ENCODE measurements at regions of chr5 and their contacts with region 1.

Region 1: DNA sequence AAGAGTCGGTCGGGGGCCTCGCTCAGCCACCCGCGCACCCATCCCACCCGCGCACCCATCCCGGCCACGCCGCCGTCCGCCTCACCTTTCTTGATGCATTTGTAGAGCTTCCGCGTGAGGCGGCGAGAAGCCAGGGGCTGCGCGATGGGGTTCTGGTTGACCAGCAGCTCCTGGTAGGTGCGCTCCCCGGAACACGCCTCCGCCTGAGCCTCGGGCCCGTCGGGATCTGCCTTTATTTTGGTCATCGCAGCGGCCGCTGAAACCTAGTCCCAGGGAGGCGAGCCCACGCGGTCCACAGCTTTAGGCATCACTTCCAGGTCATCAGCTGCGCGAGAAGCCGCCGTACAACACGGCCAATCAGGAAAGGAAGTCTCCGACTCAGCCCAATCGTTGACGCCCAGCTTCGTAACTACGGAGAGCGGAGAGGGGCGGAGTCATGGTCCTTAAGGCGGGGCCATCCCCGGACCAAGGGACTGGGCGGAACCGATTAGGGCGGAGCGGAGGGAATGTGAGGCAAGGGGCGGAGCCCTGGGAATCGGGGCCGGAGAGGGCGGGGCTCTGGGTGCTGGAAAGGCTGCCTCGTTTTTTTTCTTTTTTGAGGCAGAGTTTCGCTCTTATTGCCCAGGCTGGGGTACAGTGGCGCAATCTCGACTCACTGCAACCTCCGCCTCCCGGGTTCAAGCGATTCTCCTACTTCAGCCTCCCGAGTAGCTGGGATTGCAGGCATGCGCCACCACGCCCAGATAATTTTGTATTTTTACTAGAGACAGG is at the start of gene NHP2:
- DNase-seq: peak; percentile 99
- H3K4me3 ChIP-seq: peak within 1 kb of the TSS; percentile 47 to 79 (median 71)
- H3K27ac ChIP-seq: peak within 1 kb of the TSS; percentile 14
- H3K4me1 ChIP-seq: peaks cover 6% of the 10 kb centered on the region
- H3K27me3 ChIP-seq: no peaks in the 10 kb centered on the region
- CTCF ChIP-seq: no peak
- POLR2A ChIP-seq: peak; percentile 50
- total RNA-seq, gene NHP2: 205 and 210 TPM in 2 replicates

Region 2: GRCh38 chr5:177599731-177600507 is 553.8 kb before region 1 on chr5 and contains the start of gene B4GALT7:
- CTCF ChIA-PET with region 1: no interaction called
- POLR2A ChIA-PET with region 1: no interaction called
- dilution Hi-C with region 1: no loop called
- intact Hi-C with region 1: loop called (anchors 2 kb)
- DNase-seq: peak; percentile 73
- H3K4me3 ChIP-seq: peak within 1 kb of the TSS; percentile 73 to 90 (median 77)
- H3K27ac ChIP-seq: peak within 1 kb of the TSS; percentile 61
- H3K4me1 ChIP-seq: peaks cover 14% of the 10 kb centered on the region
- H3K27me3 ChIP-seq: no peaks in the 10 kb centered on the region
- CTCF ChIP-seq: no peak
- POLR2A ChIP-seq: peak; percentile 94
- total RNA-seq, gene B4GALT7: 35.1 and 35.3 TPM in 2 replicates

Region 3: GRCh38 chr5:178113199-178113787 is 40.5 kb before region 1 on chr5 and contains the start of gene N4BP3:
- CTCF ChIA-PET with region 1: interaction called, 3 read pairs
- POLR2A ChIA-PET with region 1: no interaction called
- dilution Hi-C with region 1: no loop called
- intact Hi-C with region 1: loop called (anchors 1 kb)
- DNase-seq: peak; percentile 56
- H3K4me3 ChIP-seq: peak within 1 kb of the TSS; percentile 20 to 94 (median 69)
- H3K27ac ChIP-seq: no peak within 1 kb of the TSS
- H3K4me1 ChIP-seq: peaks cover 37% of the 10 kb centered on the region
- H3K27me3 ChIP-seq: no peaks in the 10 kb centered on the region
- CTCF ChIP-seq: peak; percentile 3 to 7
- POLR2A ChIP-seq: no peak
- total RNA-seq, gene N4BP3: 38.2 and 40.3 TPM in 2 replicates

Region 4: DNA sequence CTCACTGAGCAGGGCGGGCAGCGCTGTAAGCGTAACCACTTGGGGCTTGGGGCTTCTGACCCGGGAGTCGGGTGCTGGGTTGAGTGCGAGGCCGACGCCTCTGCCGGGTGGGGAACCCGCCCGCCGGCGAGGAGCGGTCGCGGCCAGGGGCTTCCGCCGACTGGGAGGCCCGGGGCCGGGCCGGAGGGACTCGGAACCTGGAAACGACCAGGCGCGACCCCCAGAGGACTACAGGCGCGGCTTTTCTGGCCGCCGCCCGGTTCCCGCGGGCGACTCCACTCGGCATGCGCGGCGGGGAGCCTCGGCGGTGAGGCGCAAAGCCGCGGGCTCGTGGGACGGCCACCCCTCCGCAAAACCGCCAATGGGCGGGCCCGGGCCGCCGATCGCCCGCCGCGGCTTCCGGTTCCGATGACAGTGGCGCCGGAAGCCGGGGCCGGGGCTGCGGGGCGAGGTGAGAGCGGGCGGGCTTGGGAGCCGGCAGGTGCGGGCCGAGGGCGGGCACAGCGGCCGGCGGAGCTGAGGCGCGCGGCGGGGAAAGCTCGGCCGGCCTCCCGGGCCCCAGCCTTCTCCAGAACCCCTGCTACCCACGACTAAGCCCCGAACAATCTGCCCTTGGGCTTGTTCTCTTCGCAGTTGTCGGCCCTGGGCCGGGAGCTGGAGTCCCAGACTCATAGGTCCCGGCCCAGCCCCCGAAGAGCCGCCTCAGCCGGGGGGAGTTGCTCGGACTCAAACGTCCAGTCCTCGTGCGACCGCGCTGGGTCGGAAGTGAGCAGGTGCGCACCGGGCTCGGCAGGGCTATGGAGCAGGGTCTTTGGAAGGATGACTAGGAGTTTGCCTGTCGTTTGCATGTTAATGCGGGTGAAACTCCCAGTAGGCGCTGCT is 22.9 kb before region 1 on chr5 and contains the start of gene RMND5B:
- CTCF ChIA-PET with region 1: no interaction called
- POLR2A ChIA-PET with region 1: no interaction called
- dilution Hi-C with region 1: no loop called
- intact Hi-C with region 1: loop called (anchors 1 kb)
- DNase-seq: peak; percentile 68
- H3K4me3 ChIP-seq: peak within 1 kb of the TSS; percentile 62 to 82 (median 64)
- H3K27ac ChIP-seq: peak within 1 kb of the TSS; percentile 40
- H3K4me1 ChIP-seq: peaks cover 11% of the 10 kb centered on the region
- H3K27me3 ChIP-seq: no peaks in the 10 kb centered on the region
- CTCF ChIP-seq: no peak
- POLR2A ChIP-seq: peak; percentile 70
- total RNA-seq, gene RMND5B: 34.2 and 38.2 TPM in 2 replicates

Region 5: GRCh38 chr5:178204182-178204894 is 50.6 kb after region 1 on chr5 and contains the start of gene HNRNPAB:
- CTCF ChIA-PET with region 1: no interaction called
- POLR2A ChIA-PET with region 1: interaction called, 9 read pairs
- dilution Hi-C with region 1: no loop called
- intact Hi-C with region 1: loop called (anchors 2 kb)
- DNase-seq: peak; percentile 96
- H3K4me3 ChIP-seq: peak within 1 kb of the TSS; percentile 66 to 93 (median 81)
- H3K27ac ChIP-seq: peak within 1 kb of the TSS; percentile 65
- H3K4me1 ChIP-seq: peaks cover 22% of the 10 kb centered on the region
- H3K27me3 ChIP-seq: no peaks in the 10 kb centered on the region
- CTCF ChIP-seq: no peak
- POLR2A ChIP-seq: peak; percentile 100
- total RNA-seq, gene HNRNPAB: 309 and 310 TPM in 2 replicates

Measured in endothelial cell of umbilical vein (primary cell).